ENCODE measurements at regions of chr3 and their contacts with region 1.

Region 1: GRCh38 chr3:59424268-59425010 is 374.6 kb upstream of the CFAP20DC start:
- DNase-seq: peak; percentile 34
- H3K4me3 Mint-ChIP-seq: no peak overlapping the region
- H3K27ac Mint-ChIP-seq: no peak overlapping the region
- H3K4me1 Mint-ChIP-seq: peaks cover 68% of the 10 kb centered on the region
- H3K27me3 Mint-ChIP-seq: peaks cover 4% of the 10 kb centered on the region

Region 2: DNA sequence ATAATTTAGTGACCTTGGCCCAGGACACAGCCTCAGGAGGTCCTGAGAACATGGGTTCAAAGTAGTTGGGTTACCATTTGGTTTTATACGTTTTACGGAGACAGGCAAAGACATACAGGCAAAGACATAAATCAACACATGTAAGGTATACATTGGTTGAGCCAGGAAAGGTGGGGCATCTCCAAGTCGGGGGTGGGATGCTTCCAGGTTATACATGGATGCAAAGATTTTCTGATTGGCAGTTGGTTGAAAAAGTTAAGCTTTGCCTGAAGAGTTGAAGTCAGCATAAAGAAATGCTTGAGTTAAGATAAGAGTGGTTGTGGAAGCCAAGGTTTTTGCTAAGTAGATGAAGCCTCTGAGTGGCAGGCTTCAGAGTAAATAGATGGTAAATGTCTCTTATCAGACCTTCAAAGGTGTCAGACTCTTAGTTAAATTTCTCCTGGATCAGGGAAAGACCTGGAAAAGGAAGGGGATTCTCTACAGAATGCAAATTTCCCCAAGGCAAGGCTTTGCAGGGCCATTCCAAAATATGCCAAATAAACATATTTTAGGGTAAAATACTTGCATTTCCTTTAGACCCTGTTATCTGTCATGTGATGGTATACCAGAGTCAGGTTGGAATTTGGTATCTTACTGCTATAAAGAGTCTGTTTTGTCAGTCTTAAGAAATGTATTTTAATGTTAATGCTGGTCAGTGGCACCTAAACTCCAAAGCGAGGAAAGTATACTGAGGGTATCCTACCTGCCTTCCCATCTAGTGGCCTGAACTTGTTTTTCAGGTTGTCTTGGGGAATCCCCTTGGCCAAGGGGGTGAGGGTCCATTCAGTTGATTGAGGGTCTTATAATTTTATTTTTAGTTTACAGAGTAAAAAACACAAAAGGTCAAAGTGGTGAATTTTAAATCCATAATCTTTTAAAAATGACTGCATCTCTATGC is 982.7 kb before region 1 on chr3:
- CTCF ChIA-PET with region 1: no interaction called
- intact Hi-C with region 1: no loop called
- DNase-seq: no peak
- H3K4me3 Mint-ChIP-seq: no peak overlapping the region
- H3K27ac Mint-ChIP-seq: no peak overlapping the region
- H3K4me1 Mint-ChIP-seq: no peaks in the 10 kb centered on the region
- H3K27me3 Mint-ChIP-seq: no peaks in the 10 kb centered on the region

Region 3: DNA sequence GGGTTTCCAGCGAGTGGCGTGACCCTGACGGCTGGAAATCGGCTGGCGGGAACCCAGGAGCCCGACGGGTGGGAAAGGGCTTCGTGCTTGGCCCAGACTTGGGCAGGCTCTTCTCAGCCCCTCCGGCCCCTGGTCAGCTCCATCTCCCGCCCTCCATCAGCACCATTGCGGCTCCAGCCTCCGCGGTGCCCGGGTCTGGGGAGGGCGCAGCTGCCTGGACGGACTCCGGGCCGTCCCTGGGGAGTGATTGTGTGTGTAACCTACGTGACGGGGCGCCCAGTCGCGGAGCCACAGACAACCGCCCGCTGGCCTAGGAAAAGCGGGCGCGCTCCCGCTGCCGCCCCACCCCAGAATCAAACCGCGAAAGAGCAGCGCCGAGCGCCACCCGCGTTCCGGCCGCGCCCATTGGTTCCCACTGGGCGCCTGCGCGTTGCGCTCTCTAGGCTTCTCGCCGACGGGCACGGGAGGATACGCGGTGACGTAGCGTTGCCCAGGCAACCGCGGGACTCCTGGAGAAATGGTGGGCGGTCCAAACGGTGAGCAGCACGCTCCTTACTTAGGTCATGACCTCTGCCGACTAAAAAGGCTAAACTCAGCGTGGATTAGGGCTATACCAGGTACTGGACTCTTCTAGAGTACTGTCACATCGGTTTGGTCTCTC is 374.6 kb before region 1 on chr3 and contains the start of gene CFAP20DC:
- CTCF ChIA-PET with region 1: no interaction called
- intact Hi-C with region 1: loop called (anchors 1 kb)
- DNase-seq: peak; percentile 95
- H3K4me3 Mint-ChIP-seq: peak within 1 kb of the TSS; percentile 68
- H3K27ac Mint-ChIP-seq: peak within 1 kb of the TSS; percentile 68
- H3K4me1 Mint-ChIP-seq: peaks cover 9% of the 10 kb centered on the region
- H3K27me3 Mint-ChIP-seq: no peaks in the 10 kb centered on the region
- total RNA-seq, gene CFAP20DC: 2.4 to 2.7 TPM

Region 4: DNA sequence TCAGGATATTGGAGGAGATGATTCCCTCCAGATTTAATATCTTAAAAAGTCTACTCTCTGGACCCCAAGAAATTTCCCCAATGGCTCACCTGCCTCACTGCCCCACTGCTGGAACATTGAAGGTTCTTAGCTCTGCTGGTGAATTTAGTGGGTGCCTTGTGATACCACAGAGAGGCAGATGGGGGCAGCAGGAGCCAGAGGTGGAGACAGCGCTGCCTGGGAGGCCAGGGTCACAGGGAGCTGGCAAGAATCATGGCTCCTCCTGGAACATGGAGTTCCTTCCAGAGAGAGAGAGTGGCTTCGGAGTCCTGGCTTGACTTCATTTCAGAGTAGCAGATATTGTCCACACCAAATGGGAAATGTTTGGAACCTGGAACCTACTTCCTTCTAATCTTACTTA is 111.1 kb before region 1 on chr3:
- CTCF ChIA-PET with region 1: interaction called, 7 read pairs
- intact Hi-C with region 1: loop called (anchors 1 kb)
- DNase-seq: peak; percentile 74
- H3K4me3 Mint-ChIP-seq: no peak overlapping the region
- H3K27ac Mint-ChIP-seq: no peak overlapping the region
- H3K4me1 Mint-ChIP-seq: peaks cover 22% of the 10 kb centered on the region
- H3K27me3 Mint-ChIP-seq: no peaks in the 10 kb centered on the region

Region 5: DNA sequence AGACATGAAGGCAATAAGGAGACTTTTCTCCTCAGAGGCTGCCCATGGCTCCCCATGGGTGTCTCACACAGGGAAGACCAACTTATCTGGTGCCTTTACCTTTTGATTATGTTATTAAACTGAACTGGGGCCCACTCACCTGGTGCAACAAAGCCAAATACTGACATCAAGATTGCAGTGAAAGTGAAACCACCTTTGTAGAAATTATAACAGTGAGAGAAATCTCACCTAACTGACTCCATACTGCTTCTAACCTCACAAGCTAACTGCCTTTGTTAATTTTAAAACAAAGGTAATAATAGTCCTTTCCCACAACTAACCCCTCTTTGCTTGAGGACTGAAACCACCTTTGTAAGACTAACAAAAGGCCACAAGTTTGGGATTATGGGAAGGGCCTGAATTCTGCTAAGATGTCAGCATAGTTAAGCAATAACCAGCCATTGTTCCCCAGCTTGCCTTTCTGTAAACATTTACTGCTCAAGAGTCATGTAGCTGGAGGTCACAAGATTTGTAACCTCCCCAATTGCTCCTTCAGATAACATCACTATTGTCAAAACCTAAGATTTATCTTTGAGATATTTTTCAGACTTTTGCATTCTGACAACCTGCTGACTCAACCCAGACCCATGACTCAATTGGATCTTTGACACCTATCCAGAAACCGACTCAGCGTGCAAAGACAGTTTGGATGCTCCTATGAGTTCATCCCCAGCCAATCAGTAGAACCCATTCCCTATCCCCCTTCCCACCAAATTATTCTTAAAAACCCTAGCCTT is 45.7 kb after region 1 on chr3:
- CTCF ChIA-PET with region 1: interaction called, 3 read pairs
- intact Hi-C with region 1: loop called (anchors 1 kb)
- DNase-seq: peak; percentile 63
- H3K4me3 Mint-ChIP-seq: no peak overlapping the region
- H3K27ac Mint-ChIP-seq: no peak overlapping the region
- H3K4me1 Mint-ChIP-seq: peaks cover 28% of the 10 kb centered on the region
- H3K27me3 Mint-ChIP-seq: no peaks in the 10 kb centered on the region

Region 6: DNA sequence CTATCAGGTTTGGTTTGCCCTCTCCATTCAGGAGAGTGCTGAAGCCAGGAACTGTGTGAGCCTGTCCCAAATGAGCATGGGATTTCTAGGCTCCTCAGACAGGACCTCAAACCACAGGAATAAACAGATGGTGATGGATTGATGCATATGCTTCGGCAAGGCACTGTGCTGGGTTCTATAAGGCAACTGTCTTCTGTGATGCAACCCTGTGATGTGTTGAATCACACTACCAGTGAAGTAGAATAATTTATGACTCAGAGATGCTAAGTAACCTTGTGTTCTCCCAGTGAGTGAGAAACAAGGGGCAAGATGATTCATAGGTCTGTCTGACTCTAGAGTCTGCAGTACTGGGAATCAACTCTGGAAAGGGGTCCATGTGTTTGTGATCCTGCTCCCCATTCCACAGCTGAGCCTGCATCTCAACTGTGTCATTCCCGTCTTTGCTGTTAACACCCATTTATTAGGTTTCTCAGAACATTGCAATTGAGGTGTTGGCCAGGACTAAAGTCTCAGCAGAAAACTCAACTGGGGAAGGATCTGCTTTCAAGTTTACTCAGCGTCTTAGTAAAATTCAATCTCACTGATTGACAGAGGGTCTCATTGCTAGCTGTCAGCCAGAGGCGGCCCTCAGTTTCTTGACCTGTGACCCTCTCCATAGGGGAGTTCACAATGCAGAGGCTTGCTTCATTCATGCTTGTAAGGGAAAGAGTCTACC is 135.4 kb after region 1 on chr3:
- CTCF ChIA-PET with region 1: no interaction called
- intact Hi-C with region 1: loop called (anchors 1 kb)
- DNase-seq: peak; percentile 71
- H3K4me3 Mint-ChIP-seq: no peak overlapping the region
- H3K27ac Mint-ChIP-seq: peak overlapping the region; percentile 84
- H3K4me1 Mint-ChIP-seq: peaks cover 24% of the 10 kb centered on the region
- H3K27me3 Mint-ChIP-seq: no peaks in the 10 kb centered on the region

Region 7: GRCh38 chr3:59771768-59772181 is 347.3 kb after region 1 on chr3:
- CTCF ChIA-PET with region 1: no interaction called
- intact Hi-C with region 1: loop called (anchors 5 kb)
- DNase-seq: no peak
- H3K4me3 Mint-ChIP-seq: no peak overlapping the region
- H3K27ac Mint-ChIP-seq: no peak overlapping the region
- H3K4me1 Mint-ChIP-seq: peaks cover 37% of the 10 kb centered on the region
- H3K27me3 Mint-ChIP-seq: no peaks in the 10 kb centered on the region

Region 8: GRCh38 chr3:60053526-60054265 is 629.3 kb after region 1 on chr3:
- CTCF ChIA-PET with region 1: no interaction called
- intact Hi-C with region 1: loop called (anchors 1 kb)
- DNase-seq: peak; percentile 80
- H3K4me3 Mint-ChIP-seq: peak overlapping the region; percentile 32
- H3K27ac Mint-ChIP-seq: peak overlapping the region; percentile 92
- H3K4me1 Mint-ChIP-seq: peaks cover 86% of the 10 kb centered on the region
- H3K27me3 Mint-ChIP-seq: no peaks in the 10 kb centered on the region